Activated B cell treated with CpG ODN at 0.5 μM for 24 hours (primary cell): ENCODE measurements at regions of chr14 and their contacts with region 1.

Region 1: DNA sequence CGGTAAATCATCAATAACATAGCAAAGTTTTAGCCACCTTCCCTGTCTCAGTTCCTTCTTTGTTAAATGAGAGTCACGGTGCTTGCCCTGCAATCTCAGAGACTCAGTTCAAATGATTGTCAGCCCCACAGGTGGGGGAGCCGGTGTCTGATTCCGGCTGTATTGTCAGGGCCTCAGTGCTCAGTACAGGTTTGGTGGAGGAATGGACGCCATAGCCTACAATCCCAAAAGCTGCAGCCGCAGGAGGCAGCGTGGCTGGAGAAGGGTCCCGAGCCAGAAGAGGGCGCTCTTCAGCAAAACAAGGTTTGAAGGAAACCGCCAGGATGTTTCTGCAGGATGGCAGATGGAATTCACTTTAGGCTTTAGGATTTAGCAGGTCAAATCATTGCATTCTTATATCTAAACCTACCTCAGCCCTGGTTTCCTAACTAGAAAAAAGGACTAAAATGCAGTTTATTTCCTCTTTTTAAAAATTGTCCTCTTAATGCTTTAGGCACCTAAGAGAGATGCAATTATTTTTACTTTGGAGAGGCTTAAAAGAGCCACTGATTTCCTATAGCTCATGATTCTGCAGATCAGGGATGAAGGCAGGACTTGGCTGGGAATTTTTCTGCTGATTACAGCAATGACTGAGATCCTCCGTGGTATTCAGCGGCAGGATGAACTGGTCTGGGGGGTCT is 29.2 kb downstream of the FOS start:
- DNase-seq: peak; percentile 53
- ATAC-seq: peak; percentile 53
- H3K4me3 Mint-ChIP-seq: no peak overlapping the region
- H3K27ac Mint-ChIP-seq: no peak overlapping the region
- H3K4me1 Mint-ChIP-seq: peaks cover 21% of the 10 kb centered on the region
- H3K27me3 Mint-ChIP-seq: no peaks in the 10 kb centered on the region
- CTCF ChIP-seq: peak; percentile 73

Region 2: DNA sequence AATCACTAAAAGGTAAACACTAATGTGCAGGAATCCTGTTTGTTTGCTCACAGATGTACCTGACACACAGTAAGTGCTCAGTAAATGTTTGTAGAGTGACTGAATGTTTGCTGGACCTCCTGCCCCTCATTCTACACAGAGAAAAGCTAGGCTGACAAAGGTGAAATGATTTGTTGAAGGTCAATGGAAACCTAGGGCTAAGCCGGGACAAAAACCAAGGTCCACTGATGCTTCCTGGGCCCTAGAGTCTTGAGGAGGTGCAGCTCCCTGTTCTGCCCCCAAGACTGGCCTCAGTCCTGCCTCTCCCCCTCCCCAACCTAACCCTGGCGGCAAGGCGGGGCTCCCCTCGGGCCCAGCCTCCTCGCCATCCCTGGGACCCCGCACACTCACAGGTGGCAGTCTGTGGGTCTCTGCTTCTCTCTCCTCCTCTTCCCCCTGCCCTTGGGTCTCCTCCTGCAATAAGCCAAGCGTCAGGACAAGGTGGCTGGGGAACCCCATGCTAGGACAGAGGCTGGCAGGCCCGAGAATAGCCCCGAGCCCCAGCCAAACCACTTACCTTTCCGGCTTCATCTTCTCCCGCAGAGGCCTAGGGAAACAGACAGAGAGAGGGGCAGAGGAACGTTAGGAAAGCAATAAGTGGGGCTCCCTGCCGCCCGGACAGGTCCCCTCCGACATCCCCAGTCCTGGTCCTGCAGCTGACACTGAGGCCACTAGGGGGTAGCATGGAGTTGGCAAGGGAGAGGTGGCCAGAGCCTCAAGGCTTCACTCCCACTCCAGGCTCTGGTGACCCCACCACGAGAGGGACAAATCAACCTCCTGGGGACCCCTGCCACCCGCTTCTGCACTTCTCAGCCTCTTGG is 361.8 kb before region 1 on chr14:
- CTCF ChIA-PET with region 1: no interaction called
- POLR2A ChIA-PET with region 1: no interaction called
- intact Hi-C with region 1: loop called (anchors 10 kb)
- DNase-seq: peak; percentile 61
- ATAC-seq: peak; percentile 67
- H3K4me3 Mint-ChIP-seq: no peak overlapping the region
- H3K27ac Mint-ChIP-seq: peak overlapping the region; percentile 46
- H3K4me1 Mint-ChIP-seq: peaks cover 34% of the 10 kb centered on the region
- H3K27me3 Mint-ChIP-seq: peaks cover 2% of the 10 kb centered on the region
- CTCF ChIP-seq: no peak

Region 3: GRCh38 chr14:75132382-75133086 is 175.3 kb before region 1 on chr14:
- CTCF ChIA-PET with region 1: interaction called, 60 read pairs
- POLR2A ChIA-PET with region 1: no interaction called
- intact Hi-C with region 1: loop called (anchors 1 kb)
- DNase-seq: no peak
- ATAC-seq: peak; percentile 87
- H3K4me3 Mint-ChIP-seq: no peak overlapping the region
- H3K27ac Mint-ChIP-seq: no peak overlapping the region
- H3K4me1 Mint-ChIP-seq: peaks cover 16% of the 10 kb centered on the region
- H3K27me3 Mint-ChIP-seq: no peaks in the 10 kb centered on the region
- CTCF ChIP-seq: peak; percentile 51

Region 4: GRCh38 chr14:75293920-75294642 is 13.8 kb before region 1 on chr14:
- CTCF ChIA-PET with region 1: interaction called, 14 read pairs
- POLR2A ChIA-PET with region 1: interaction called, 4 read pairs
- intact Hi-C with region 1: no loop called
- DNase-seq: peak; percentile 96
- ATAC-seq: peak; percentile 85
- H3K4me3 Mint-ChIP-seq: peak overlapping the region; percentile 95
- H3K27ac Mint-ChIP-seq: peak overlapping the region; percentile 88
- H3K4me1 Mint-ChIP-seq: peaks cover 21% of the 10 kb centered on the region
- H3K27me3 Mint-ChIP-seq: peaks cover 6% of the 10 kb centered on the region
- CTCF ChIP-seq: no peak

Region 5: DNA sequence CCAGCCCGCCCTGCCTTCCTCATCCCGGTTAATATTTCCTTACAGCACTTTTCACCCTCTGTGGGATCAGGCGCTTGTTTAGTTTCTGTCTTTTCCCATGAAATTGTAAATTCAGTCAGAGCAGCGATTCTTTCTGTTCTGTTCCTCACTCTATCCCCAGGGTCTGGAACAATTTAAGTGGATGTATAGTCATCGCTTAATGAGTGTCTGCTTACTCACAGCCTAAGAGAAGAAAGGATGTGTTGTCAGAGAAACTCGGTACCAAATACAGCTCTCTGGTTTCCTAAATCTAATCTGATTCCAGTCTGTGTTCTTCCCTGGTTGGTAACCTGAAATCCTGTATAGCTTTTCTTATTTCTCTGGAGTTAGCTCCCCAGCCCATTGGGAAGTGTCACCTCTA is 15.7 kb after region 1 on chr14:
- CTCF ChIA-PET with region 1: no interaction called
- POLR2A ChIA-PET with region 1: no interaction called
- intact Hi-C with region 1: no loop called
- DNase-seq: no peak
- ATAC-seq: no peak
- H3K4me3 Mint-ChIP-seq: no peak overlapping the region
- H3K27ac Mint-ChIP-seq: no peak overlapping the region
- H3K4me1 Mint-ChIP-seq: no peaks in the 10 kb centered on the region
- H3K27me3 Mint-ChIP-seq: peaks cover 4% of the 10 kb centered on the region
- CTCF ChIP-seq: no peak

Region 6: GRCh38 chr14:75372260-75372659 is 64.4 kb after region 1 on chr14:
- CTCF ChIA-PET with region 1: no interaction called
- POLR2A ChIA-PET with region 1: no interaction called
- intact Hi-C with region 1: no loop called
- DNase-seq: no peak
- ATAC-seq: no peak
- H3K4me3 Mint-ChIP-seq: no peak overlapping the region
- H3K27ac Mint-ChIP-seq: no peak overlapping the region
- H3K4me1 Mint-ChIP-seq: no peaks in the 10 kb centered on the region
- H3K27me3 Mint-ChIP-seq: no peaks in the 10 kb centered on the region
- CTCF ChIP-seq: no peak

Region 7: DNA sequence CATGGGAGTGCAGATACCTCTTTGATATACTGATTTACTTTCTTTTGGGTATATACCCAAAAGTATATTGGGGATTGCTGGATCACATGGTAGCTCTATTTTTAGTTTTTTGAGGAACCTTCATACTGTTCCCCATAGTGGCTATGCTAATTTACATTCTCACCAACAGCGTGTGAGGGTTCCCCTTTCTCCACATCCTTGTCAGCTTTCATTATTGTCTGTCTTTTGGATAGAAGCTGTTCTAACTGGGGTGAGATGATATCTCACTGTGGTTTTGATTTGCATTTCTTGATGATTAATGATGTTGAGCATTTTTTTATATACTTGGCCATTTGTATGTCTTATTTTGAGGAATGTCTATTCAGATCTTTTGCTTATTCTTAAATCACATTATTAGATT is 75.9 kb after region 1 on chr14:
- CTCF ChIA-PET with region 1: no interaction called
- POLR2A ChIA-PET with region 1: no interaction called
- intact Hi-C with region 1: no loop called
- DNase-seq: no peak
- ATAC-seq: no peak
- H3K4me3 Mint-ChIP-seq: no peak overlapping the region
- H3K27ac Mint-ChIP-seq: no peak overlapping the region
- H3K4me1 Mint-ChIP-seq: peaks cover 4% of the 10 kb centered on the region
- H3K27me3 Mint-ChIP-seq: peaks cover 6% of the 10 kb centered on the region
- CTCF ChIP-seq: no peak

Region 8: DNA sequence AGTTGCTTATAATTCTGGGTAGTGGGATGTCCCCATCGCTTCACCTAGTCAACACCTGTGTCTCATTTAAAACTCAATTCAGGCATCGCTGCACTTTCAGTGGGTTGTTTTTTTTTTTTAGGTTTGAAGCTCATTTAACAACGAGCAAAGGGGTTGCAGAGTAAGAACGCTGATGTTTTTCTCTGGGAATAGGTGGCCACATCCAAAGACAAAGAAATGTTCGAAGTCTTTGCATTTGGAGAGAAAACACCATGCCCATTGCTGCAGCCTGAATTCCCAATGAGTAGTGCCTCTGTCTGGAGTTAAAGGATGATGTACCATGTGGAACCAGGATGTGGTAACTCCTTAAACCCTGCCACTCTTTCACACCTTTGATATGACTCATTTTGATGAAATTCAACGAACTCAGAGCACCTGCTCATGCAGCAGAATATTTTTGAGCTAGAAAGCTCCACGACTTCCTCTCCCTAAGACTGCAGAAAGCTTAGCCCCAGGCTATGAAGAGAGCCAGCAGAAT is 179.4 kb after region 1 on chr14:
- CTCF ChIA-PET with region 1: interaction called, 42 read pairs
- POLR2A ChIA-PET with region 1: interaction called, 9 read pairs
- intact Hi-C with region 1: loop called (anchors 1 kb)
- DNase-seq: no peak
- ATAC-seq: peak; percentile 66
- H3K4me3 Mint-ChIP-seq: peak overlapping the region; percentile 9
- H3K27ac Mint-ChIP-seq: peak overlapping the region; percentile 42
- H3K4me1 Mint-ChIP-seq: peaks cover 22% of the 10 kb centered on the region
- H3K27me3 Mint-ChIP-seq: no peaks in the 10 kb centered on the region
- CTCF ChIP-seq: no peak

Region 9: GRCh38 chr14:75531660-75532317 is 223.9 kb after region 1 on chr14:
- CTCF ChIA-PET with region 1: no interaction called
- POLR2A ChIA-PET with region 1: no interaction called
- intact Hi-C with region 1: no loop called
- DNase-seq: no peak
- ATAC-seq: no peak
- H3K4me3 Mint-ChIP-seq: no peak overlapping the region
- H3K27ac Mint-ChIP-seq: peak overlapping the region; percentile 9
- H3K4me1 Mint-ChIP-seq: peaks cover 59% of the 10 kb centered on the region
- H3K27me3 Mint-ChIP-seq: no peaks in the 10 kb centered on the region
- CTCF ChIP-seq: no peak

Region 10: GRCh38 chr14:75577729-75578101 is 269.9 kb after region 1 on chr14:
- CTCF ChIA-PET with region 1: no interaction called
- POLR2A ChIA-PET with region 1: no interaction called
- intact Hi-C with region 1: loop called (anchors 5 kb)
- DNase-seq: peak; percentile 60
- ATAC-seq: peak; percentile 85
- H3K4me3 Mint-ChIP-seq: peak overlapping the region; percentile 89
- H3K27ac Mint-ChIP-seq: peak overlapping the region; percentile 72
- H3K4me1 Mint-ChIP-seq: peaks cover 29% of the 10 kb centered on the region
- H3K27me3 Mint-ChIP-seq: peaks cover 3% of the 10 kb centered on the region
- CTCF ChIP-seq: peak; percentile 36

Region 11: DNA sequence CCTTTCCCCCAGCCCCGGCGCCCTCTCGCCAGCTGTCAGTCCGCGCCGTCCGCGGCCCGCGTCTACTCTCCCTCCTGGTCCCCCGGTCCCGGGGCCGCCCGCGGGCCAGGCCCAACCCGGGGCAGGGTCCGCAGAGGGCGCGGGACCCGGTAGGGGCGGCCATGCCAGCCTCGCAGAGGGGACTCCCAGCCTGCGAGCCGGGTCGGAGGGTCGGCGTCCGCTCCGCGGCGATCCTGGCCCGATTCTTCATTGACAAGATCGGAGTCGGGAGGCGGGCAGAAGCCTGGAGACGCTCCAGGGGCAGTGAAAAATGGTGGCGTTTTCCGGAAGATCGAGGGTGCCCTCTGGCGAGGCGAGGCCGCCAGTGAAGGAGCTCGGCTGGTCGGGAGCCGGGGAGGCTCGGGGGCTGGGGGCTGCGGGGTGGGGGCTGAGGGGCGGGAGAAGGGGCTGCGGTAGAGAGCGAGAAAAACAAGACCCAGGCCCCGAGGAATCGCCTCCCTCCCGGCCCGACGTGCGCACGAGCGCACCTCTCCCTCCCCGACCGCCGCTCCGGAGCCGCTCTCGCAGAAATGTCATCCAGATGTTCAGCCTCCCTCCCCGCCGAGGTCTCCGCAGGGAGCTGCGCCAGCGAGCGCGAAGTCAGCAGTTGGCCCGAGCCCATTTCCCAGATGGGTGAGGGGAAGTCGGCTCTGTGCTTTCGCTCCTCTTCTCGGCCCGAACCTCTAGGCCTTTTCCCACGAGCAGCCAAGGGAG is 674.6 kb after region 1 on chr14:
- CTCF ChIA-PET with region 1: no interaction called
- POLR2A ChIA-PET with region 1: no interaction called
- intact Hi-C with region 1: loop called (anchors 10 kb)
- DNase-seq: peak; percentile 79
- ATAC-seq: peak; percentile 69
- H3K4me3 Mint-ChIP-seq: peak overlapping the region; percentile 87
- H3K27ac Mint-ChIP-seq: peak overlapping the region; percentile 72
- H3K4me1 Mint-ChIP-seq: peaks cover 64% of the 10 kb centered on the region
- H3K27me3 Mint-ChIP-seq: no peaks in the 10 kb centered on the region
- CTCF ChIP-seq: no peak